Aorta (tissue), 5 donors: ENCODE measurements at regions of chr18 and their contacts with region 1.

Region 1: GRCh38 chr18:14086458-14087231 is 45.6 kb downstream of the ZNF519 start:
- DNase-seq: no peak
- ATAC-seq: peak; percentile 28
- H3K4me3 ChIP-seq: no peak overlapping the region
- H3K27ac ChIP-seq: no peak overlapping the region
- H3K4me1 ChIP-seq: no peaks in the 10 kb centered on the region
- H3K27me3 ChIP-seq: no peaks in the 10 kb centered on the region

Region 2: DNA sequence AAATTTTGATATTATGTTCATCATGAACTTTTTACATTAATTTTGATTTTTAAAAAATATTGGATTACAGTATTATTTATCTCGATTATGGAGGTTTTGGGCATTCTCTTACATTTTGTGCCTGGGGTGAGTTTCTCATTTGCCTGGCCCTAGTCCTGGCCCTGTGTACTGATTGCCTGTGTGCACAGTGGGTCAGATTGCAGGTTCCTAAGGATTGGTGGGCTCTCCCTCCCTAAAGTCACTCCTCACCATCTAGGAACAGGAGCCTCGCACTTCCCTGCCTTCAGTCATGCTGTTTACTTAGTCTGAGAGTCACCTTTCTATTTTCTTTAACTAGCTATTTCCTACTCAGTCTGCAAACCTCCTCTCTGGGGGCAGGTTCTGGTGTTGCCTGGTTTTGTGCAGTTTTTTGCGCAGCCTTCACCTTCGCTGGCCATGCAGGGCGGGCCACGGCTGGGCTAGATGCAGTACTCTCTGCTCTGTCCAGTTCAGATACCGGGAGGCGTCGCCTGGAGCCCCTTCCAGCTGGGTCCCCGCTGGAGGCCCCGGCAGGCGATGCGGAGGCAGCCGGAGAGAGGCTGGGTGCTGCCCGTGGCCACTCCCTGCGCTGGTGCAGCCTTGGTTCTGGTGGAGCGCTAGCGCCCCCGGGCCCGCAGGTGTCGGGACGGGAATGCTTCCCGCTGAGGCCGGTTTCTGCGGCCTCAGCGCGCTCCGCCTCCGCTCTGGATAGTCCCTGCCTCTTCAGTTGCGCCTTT is 286.0 kb before region 1 on chr18:
- intact Hi-C with region 1: no loop called
- DNase-seq: peak; percentile 76 to 87
- ATAC-seq: peak; percentile 82
- H3K4me3 ChIP-seq: peak overlapping the region; percentile 4 to 32
- H3K27ac ChIP-seq: no peak overlapping the region
- H3K4me1 ChIP-seq: no peaks in the 10 kb centered on the region
- H3K27me3 ChIP-seq: no peaks in the 10 kb centered on the region

Region 3: DNA sequence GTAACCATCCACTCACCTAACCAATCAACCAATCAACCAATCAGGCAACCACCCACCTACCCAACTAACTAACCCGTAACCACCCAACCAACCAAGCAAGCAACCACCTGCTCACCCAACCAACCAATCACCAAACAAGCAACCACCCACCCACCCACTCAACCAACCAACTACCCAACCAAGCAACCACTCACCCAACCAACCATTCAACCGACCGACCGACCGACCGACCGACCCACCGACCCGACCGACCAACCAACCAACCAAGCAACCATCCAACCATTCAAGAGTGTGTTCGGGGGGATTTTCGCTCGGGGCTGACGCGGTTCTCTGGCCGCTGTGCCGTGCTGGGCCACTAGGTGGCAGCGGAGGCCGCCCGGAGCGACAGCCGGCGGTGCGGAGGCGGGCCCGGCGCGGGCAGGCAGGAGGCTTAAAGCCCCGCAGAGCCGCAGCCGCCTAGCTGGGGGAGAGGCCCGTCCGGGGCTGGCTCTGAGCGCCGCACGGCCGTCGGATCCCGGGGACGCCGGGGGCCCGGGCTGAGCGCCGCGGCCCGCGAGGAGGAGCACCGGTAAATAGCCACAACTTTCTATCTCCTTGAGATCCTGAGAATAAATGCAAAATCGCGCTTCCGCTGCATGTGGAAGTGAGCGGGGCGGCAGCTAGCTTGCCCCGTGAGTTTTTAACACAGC is 262.8 kb before region 1 on chr18 and contains the start of gene MC5R:
- intact Hi-C with region 1: loop called in 1 of 2 experiments (anchors 5 kb)
- DNase-seq: peak; percentile 65 to 91
- ATAC-seq: peak; percentile 90
- H3K4me3 ChIP-seq: peak within 1 kb of the TSS in 1 of 2 donors; percentile 33
- H3K27ac ChIP-seq: no peak within 1 kb of the TSS
- H3K4me1 ChIP-seq: no peaks in the 10 kb centered on the region
- H3K27me3 ChIP-seq: no peaks in the 10 kb centered on the region
- total RNA-seq, gene MC5R: not detected